Calu3 (cell line): ENCODE measurements at regions of chr1 and their contacts with region 1.

Region 1: DNA sequence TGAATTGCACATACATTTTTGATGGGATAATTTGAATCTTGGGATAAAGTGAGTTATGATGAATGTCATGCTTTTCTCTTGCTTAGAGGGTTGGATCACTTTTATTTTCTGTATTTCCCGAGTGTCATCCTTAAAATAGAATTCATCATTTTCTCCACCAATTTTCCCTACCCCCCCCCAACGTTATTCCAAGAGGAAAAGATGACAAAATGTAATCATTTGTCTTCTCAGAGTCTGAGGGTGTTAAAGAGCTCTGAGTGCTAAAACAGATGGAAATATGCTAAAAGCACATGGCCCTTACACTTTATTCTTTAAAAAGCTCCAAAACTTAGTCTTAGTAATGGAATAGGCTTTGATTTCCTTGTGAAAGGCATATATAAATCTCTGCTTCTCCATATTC is 81.4 kb downstream of the CHRM3 start:
- DNase-seq: no peak
- H3K4me3 Mint-ChIP-seq: no peak overlapping the region
- H3K27ac Mint-ChIP-seq: no peak overlapping the region
- H3K4me1 Mint-ChIP-seq: no peaks in the 10 kb centered on the region
- H3K27me3 Mint-ChIP-seq: no peaks in the 10 kb centered on the region
- CTCF ChIP-seq: no peak

Region 2: GRCh38 chr1:239140968-239141367 is 326.8 kb before region 1 on chr1:
- CTCF ChIA-PET with region 1: no interaction called
- intact Hi-C with region 1: no loop called
- DNase-seq: no peak
- H3K4me3 Mint-ChIP-seq: no peak overlapping the region
- H3K27ac Mint-ChIP-seq: no peak overlapping the region
- H3K4me1 Mint-ChIP-seq: no peaks in the 10 kb centered on the region
- H3K27me3 Mint-ChIP-seq: no peaks in the 10 kb centered on the region
- CTCF ChIP-seq: no peak

Region 3: GRCh38 chr1:239997160-239997514 is 529.4 kb after region 1 on chr1:
- CTCF ChIA-PET with region 1: interaction called, 11 read pairs
- intact Hi-C with region 1: no loop called
- DNase-seq: no peak
- H3K4me3 Mint-ChIP-seq: peak overlapping the region; percentile 53
- H3K27ac Mint-ChIP-seq: no peak overlapping the region
- H3K4me1 Mint-ChIP-seq: no peaks in the 10 kb centered on the region
- H3K27me3 Mint-ChIP-seq: peaks cover 66% of the 10 kb centered on the region
- CTCF ChIP-seq: no peak